ENCODE measurements at regions of chr2 and their contacts with region 1.

Region 1: DNA sequence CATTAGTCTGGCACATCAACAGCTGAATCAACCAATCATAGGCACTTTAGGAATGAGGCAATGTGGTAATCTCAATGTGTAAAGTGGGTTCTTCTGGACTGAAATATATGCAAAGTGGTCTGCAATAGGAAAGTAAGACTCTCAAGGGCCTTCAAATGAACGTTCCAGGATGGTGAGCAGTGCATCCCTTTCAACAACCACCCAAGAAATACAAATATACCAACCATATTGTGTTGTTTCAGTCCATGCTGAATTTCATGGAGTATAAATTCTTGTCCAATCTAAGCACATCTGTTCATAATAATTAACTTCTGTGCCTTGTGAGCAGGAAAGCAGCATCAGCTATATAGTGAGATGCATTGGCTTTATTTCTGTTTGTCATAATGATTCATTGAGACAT is 556.2 kb downstream of the THSD7B start:
- DNase-seq: no peak
- ATAC-seq: no peak
- H3K4me3 ChIP-seq: no peak overlapping the region
- H3K4me3 Mint-ChIP-seq: no peak overlapping the region
- H3K27ac ChIP-seq: no peak overlapping the region
- H3K27ac Mint-ChIP-seq: no peak overlapping the region
- H3K4me1 ChIP-seq: no peaks in the 10 kb centered on the region
- H3K4me1 Mint-ChIP-seq: no peaks in the 10 kb centered on the region
- H3K27me3 ChIP-seq: no peaks in the 10 kb centered on the region
- H3K27me3 Mint-ChIP-seq: no peaks in the 10 kb centered on the region
- CTCF ChIP-seq: no peak

Region 2: DNA sequence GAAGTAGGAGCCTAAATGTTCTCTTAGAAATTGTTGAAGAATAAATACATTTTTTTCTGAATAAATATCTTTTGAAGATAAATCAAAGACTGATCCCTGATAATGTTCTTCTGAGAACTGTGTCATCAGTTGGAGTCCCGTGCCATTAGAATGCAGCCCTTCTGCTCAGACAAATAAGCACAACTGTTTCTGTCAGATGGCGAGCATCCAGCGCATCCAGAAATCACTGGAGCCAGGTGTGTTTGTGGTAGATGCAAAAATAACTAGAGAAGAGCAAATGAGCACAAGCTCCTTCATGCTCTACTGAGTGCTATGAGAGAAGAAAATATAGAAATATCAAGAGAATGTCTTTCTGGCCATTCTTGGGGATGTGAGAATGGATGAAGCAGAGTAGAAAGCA is 17.5 kb after region 1 on chr2:
- CTCF ChIA-PET with region 1: no interaction called
- POLR2A ChIA-PET with region 1: no interaction called
- intact Hi-C with region 1: no loop called
- DNase-seq: no peak
- ATAC-seq: no peak
- H3K4me3 ChIP-seq: no peak overlapping the region
- H3K4me3 Mint-ChIP-seq: no peak overlapping the region
- H3K27ac ChIP-seq: no peak overlapping the region
- H3K27ac Mint-ChIP-seq: no peak overlapping the region
- H3K4me1 ChIP-seq: no peaks in the 10 kb centered on the region
- H3K4me1 Mint-ChIP-seq: no peaks in the 10 kb centered on the region
- H3K27me3 ChIP-seq: no peaks in the 10 kb centered on the region
- H3K27me3 Mint-ChIP-seq: no peaks in the 10 kb centered on the region
- CTCF ChIP-seq: no peak

Region 3: GRCh38 chr2:137357634-137358033 is 36.1 kb after region 1 on chr2:
- CTCF ChIA-PET with region 1: no interaction called
- POLR2A ChIA-PET with region 1: no interaction called
- intact Hi-C with region 1: no loop called
- DNase-seq: no peak
- ATAC-seq: no peak
- H3K4me3 ChIP-seq: no peak overlapping the region
- H3K4me3 Mint-ChIP-seq: no peak overlapping the region
- H3K27ac ChIP-seq: no peak overlapping the region
- H3K27ac Mint-ChIP-seq: no peak overlapping the region
- H3K4me1 ChIP-seq: no peaks in the 10 kb centered on the region
- H3K4me1 Mint-ChIP-seq: no peaks in the 10 kb centered on the region
- H3K27me3 ChIP-seq: no peaks in the 10 kb centered on the region
- H3K27me3 Mint-ChIP-seq: no peaks in the 10 kb centered on the region
- CTCF ChIP-seq: no peak

Region 4: DNA sequence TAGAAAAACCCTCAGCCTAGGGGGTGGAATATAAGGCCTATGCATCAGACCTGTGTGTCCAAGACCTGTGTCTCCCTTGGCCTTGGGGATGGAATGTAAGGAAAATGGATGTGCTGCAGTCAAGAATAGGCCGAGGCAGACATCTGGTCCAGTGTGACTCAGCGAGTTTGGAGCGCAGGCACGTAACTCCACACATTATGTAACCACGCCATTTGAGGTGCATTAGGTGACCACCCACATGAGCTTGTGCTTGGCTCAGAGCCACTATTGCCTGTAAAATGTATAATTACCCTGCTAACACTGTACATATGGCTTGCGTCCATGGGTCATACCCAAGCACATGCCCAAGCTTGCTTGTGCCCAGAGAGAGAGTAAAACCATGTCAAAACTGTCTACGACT is 61.8 kb after region 1 on chr2:
- CTCF ChIA-PET with region 1: no interaction called
- POLR2A ChIA-PET with region 1: no interaction called
- intact Hi-C with region 1: loop called in 1 of 2 experiments (anchors 2 kb)
- DNase-seq: no peak
- ATAC-seq: no peak
- H3K4me3 ChIP-seq: no peak overlapping the region
- H3K4me3 Mint-ChIP-seq: no peak overlapping the region
- H3K27ac ChIP-seq: no peak overlapping the region
- H3K27ac Mint-ChIP-seq: no peak overlapping the region
- H3K4me1 ChIP-seq: no peaks in the 10 kb centered on the region
- H3K4me1 Mint-ChIP-seq: no peaks in the 10 kb centered on the region
- H3K27me3 ChIP-seq: no peaks in the 10 kb centered on the region
- H3K27me3 Mint-ChIP-seq: no peaks in the 10 kb centered on the region
- CTCF ChIP-seq: no peak

Measured in CD4-positive, alpha-beta T cell (primary cell).